Activated CD4-positive, alpha-beta T cell treated with anti-CD3 and anti-CD28 coated beads, Interleukin-2, amount 10 ng/mL, durations not matched to agents 24 days and 14 days (primary cell): ENCODE measurements at regions of chr13 and their contacts with region 1.

Region 1: DNA sequence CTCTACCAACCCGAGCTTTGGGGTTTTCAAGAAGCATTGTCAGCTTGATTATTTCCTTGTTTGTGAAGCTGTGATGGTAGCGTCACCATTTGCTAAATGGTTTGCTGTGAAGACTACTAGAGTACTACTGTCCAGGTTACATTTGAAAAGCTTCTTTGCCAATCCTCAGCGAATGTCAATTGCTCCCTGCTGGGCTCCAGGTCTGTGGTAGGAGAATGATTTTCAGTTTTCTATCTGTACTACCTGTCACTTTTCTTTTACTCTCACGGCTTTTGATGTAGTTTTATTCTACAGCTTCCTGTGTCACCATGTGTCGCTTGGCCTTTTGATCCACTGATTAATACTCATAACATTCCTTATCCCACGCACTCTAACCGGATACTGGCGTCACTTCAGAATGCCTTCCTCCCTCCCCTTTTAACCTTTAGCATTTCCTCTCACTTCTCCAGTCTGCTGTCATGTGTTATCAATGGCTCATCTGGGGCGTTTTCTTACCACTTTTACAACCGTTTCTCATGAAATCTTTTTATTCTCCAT is 7.5 kb upstream of the GPR183 start:
- DNase-seq: peak; percentile 89
- H3K4me3 Mint-ChIP-seq: peak overlapping the region; percentile 76
- H3K27ac Mint-ChIP-seq: peak overlapping the region; percentile 94
- H3K4me1 Mint-ChIP-seq: peaks cover 67% of the 10 kb centered on the region
- H3K27me3 Mint-ChIP-seq: no peaks in the 10 kb centered on the region

Region 2: DNA sequence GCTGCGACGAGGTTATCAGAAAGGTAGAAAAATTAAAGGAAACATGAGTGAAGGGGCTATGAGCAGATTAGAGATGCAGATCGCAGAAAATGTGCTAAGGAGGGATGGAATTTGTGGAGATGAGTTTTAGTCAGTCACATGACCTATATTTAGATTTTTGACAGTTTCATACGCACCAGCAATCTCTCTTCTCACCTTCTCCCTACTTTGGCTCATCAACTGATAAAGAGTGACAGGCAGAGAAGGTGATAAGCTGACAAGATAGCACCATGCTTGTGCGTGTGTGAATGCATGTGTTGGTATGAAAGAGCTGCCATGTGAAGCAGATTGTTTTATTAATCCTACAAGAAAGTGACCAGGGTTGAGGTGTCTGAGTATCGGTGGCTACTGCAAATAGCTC is 1628.1 kb before region 1 on chr13:
- intact Hi-C with region 1: no loop called
- DNase-seq: peak; percentile 10
- H3K4me3 Mint-ChIP-seq: no peak overlapping the region
- H3K27ac Mint-ChIP-seq: no peak overlapping the region
- H3K4me1 Mint-ChIP-seq: no peaks in the 10 kb centered on the region
- H3K27me3 Mint-ChIP-seq: no peaks in the 10 kb centered on the region

Region 3: GRCh38 chr13:98994896-98995295 is 319.8 kb before region 1 on chr13:
- intact Hi-C with region 1: no loop called
- DNase-seq: peak; percentile 69
- H3K4me3 Mint-ChIP-seq: peak overlapping the region; percentile 55
- H3K27ac Mint-ChIP-seq: peak overlapping the region; percentile 87
- H3K4me1 Mint-ChIP-seq: peaks cover 58% of the 10 kb centered on the region
- H3K27me3 Mint-ChIP-seq: no peaks in the 10 kb centered on the region

Region 4: DNA sequence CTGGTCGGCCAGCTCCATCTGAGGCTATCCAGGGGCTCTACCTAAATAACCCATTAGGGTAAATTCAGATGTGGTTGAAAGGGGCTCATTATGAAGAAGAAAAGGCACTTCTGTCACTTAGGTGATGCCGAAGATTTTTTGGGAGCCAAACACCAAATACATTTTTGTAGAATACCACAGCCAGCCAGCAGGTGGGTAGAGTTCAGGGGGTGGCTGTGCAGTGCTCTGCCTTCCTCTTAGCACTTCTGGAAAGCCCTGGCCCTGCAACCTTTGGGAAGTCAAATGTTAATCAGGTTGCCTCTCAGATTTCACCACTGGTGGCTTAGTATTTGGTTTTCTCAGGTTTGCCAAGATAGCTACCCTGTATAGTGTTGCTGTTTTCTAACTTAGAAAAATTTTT is 38.0 kb before region 1 on chr13:
- intact Hi-C with region 1: no loop called
- DNase-seq: no peak
- H3K4me3 Mint-ChIP-seq: no peak overlapping the region
- H3K27ac Mint-ChIP-seq: no peak overlapping the region
- H3K4me1 Mint-ChIP-seq: peaks cover 68% of the 10 kb centered on the region
- H3K27me3 Mint-ChIP-seq: no peaks in the 10 kb centered on the region

Region 5: DNA sequence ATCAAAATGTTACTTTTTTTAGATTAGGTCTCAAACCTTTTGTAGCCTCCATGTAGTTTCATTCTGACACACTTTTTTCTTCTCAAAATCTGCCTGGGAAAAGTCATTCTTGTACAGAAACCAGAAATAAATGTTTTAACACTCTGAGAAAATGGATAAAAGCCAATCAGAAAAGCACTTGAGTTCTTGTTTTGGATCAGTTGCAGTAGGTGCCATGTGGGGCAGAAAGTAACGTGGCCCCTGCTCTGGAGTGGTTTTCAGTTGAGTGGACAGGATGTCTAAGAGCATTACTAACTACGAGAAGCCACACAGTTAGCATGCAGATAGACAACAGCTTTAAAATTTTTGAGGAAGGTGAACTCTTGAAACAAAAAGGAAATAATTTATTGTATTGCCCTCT is 26.6 kb before region 1 on chr13:
- intact Hi-C with region 1: loop called (anchors 2 kb)
- DNase-seq: no peak
- H3K4me3 Mint-ChIP-seq: peak overlapping the region; percentile 55
- H3K27ac Mint-ChIP-seq: peak overlapping the region; percentile 86
- H3K4me1 Mint-ChIP-seq: peaks cover 59% of the 10 kb centered on the region
- H3K27me3 Mint-ChIP-seq: no peaks in the 10 kb centered on the region

Region 6: GRCh38 chr13:99296398-99296797 is 18.3 kb before region 1 on chr13:
- intact Hi-C with region 1: loop called (anchors 2 kb)
- DNase-seq: no peak
- H3K4me3 Mint-ChIP-seq: peak overlapping the region; percentile 68
- H3K27ac Mint-ChIP-seq: peak overlapping the region; percentile 79
- H3K4me1 Mint-ChIP-seq: peaks cover 58% of the 10 kb centered on the region
- H3K27me3 Mint-ChIP-seq: no peaks in the 10 kb centered on the region

Region 7: DNA sequence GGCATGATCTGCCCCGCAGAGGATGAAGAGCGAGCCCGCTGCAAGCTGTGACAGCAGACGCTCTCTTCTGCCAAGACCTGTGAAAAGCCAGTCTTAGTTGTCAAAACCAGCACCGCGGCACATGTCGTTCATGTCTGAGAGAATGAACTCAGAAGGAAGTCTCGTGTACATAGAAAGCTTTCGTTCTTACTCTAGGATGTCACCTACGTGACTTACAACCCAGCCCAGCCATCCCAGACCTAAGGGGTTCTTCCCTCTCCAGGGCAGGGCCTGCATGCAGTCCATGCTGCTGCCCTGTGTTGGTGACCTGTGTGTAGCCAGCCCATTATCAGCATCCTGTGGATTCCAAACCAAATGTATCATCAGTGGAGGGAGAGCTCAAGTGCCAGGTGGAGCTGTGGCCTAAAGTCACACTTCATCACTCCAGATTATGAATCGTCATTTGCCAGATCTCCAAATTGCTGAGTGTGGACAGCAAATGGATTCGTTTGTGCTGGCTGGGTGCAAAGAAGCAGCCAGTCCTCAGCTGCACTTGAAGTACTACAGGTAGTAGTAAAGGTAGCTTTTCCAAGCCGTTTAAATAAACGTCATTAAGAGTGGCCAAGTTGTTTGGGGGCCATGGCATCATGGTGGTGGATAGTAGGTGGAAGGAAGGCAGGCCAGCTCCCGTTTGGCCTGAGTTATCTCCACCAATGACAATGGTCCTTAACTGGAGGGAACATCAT is 66.4 kb after region 1 on chr13:
- intact Hi-C with region 1: loop called (anchors 2 kb)
- DNase-seq: peak; percentile 88
- H3K4me3 Mint-ChIP-seq: peak overlapping the region; percentile 56
- H3K27ac Mint-ChIP-seq: peak overlapping the region; percentile 88
- H3K4me1 Mint-ChIP-seq: peaks cover 65% of the 10 kb centered on the region
- H3K27me3 Mint-ChIP-seq: no peaks in the 10 kb centered on the region

Region 8: GRCh38 chr13:99617474-99618255 is 303.0 kb after region 1 on chr13:
- intact Hi-C with region 1: no loop called
- DNase-seq: peak; percentile 75
- H3K4me3 Mint-ChIP-seq: no peak overlapping the region
- H3K27ac Mint-ChIP-seq: no peak overlapping the region
- H3K4me1 Mint-ChIP-seq: peaks cover 4% of the 10 kb centered on the region
- H3K27me3 Mint-ChIP-seq: no peaks in the 10 kb centered on the region